ENCODE measurements at regions of chr1 and their contacts with region 1.

Region 1: GRCh38 chr1:221741711-221742554 is at the start of gene DUSP10:
- DNase-seq: peak; percentile 100
- ATAC-seq: peak; percentile 93
- H3K4me3 ChIP-seq: peak within 1 kb of the TSS; percentile 74
- H3K27ac ChIP-seq: peak within 1 kb of the TSS; percentile 92
- H3K4me1 ChIP-seq: peaks cover 14% of the 10 kb centered on the region
- H3K27me3 ChIP-seq: no peaks in the 10 kb centered on the region
- CTCF ChIP-seq: 0 out of 2 replicates have a peak, but pooled peaks have one; percentile 8
- POLR2A ChIP-seq: peak; percentile 94
- RAD21 ChIP-seq: peak; percentile 49
- total RNA-seq, gene DUSP10: 59.1 and 71.4 TPM in 2 replicates

Region 2: GRCh38 chr1:221478050-221478949 is 263.6 kb before region 1 on chr1:
- CTCF ChIA-PET with region 1: interaction called, 9 read pairs
- POLR2A ChIA-PET with region 1: no interaction called
- dilution Hi-C with region 1: no loop called
- in situ Hi-C with region 1: no loop called
- intact Hi-C with region 1: loop called (anchors 1 kb)
- DNase-seq: peak; percentile 91
- ATAC-seq: peak; percentile 100
- H3K4me3 ChIP-seq: no peak overlapping the region
- H3K27ac ChIP-seq: no peak overlapping the region
- H3K4me1 ChIP-seq: 0 out of 2 replicates have a peak, but pooled peaks cover 2% of the 10 kb centered on the region
- H3K27me3 ChIP-seq: no peaks in the 10 kb centered on the region
- CTCF ChIP-seq: peak; percentile 90
- POLR2A ChIP-seq: peak; percentile 49; the same call in 1 of the 2 replicates
- RAD21 ChIP-seq: peak; percentile 98

Region 3: DNA sequence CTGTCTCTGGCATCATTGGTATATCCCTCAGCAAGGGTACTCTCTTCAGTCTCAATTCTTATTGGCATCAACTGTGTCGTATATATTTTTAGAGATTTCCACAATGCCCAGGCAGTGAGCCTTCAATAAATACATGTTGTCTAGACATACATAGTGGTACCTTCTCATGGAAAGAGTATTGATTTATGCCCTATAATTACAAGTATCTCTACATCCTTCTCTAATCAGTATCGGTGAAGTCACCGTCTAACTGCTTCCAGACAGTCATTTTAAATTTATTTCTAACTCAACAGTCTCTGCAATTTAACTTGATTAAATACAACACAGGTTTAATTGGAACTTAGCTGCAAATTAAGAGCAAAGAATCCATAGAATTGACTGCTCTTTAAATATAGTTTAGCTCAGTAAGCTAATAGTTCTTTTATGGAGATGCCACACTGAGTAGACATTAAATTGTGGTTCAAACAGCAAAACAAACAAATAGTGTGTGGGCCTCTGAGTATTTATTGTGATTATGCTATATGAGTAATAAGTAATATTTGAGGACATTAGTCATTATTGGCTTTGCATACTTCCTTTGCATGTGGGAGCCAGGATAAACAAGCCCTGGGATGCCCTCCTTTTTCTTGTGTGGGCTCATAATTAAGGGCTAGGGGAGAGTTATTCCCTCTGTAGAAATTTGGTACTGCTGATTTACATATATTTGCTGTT is 126.8 kb after region 1 on chr1:
- CTCF ChIA-PET with region 1: interaction called, 3 read pairs
- POLR2A ChIA-PET with region 1: interaction called, 4 read pairs
- dilution Hi-C with region 1: no loop called
- in situ Hi-C with region 1: no loop called
- intact Hi-C with region 1: loop called (anchors 1 kb)
- DNase-seq: peak; percentile 87
- ATAC-seq: peak; percentile 78
- H3K4me3 ChIP-seq: no peak overlapping the region
- H3K27ac ChIP-seq: no peak overlapping the region
- H3K4me1 ChIP-seq: peaks cover 11% of the 10 kb centered on the region
- H3K27me3 ChIP-seq: no peaks in the 10 kb centered on the region
- CTCF ChIP-seq: no peak
- POLR2A ChIP-seq: no peak
- RAD21 ChIP-seq: peak; percentile 12; the same call in 1 of the 2 replicates

Region 4: DNA sequence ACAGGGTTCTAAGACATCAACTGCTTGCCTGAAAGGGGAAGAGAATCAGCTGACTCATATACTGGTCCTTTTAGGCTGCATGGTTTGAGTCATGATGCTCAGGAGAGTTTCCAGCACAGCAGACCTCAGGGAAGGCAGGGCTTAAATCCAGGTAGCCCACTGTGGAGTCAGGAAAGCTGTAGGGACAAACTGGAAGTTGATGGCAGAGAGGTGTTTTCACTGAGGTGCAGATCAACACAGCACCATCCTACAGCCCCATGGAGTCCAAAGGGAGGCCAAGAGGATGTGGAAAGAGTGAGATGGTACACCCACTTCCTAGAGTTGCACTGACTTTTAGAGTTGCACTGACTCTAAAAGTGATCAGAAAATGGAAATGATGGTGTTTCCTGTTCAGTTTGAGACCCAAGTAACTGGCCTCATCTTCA is 252.4 kb after region 1 on chr1:
- CTCF ChIA-PET with region 1: no interaction called
- POLR2A ChIA-PET with region 1: no interaction called
- dilution Hi-C with region 1: no loop called
- in situ Hi-C with region 1: loop called (anchors 10 kb)
- intact Hi-C with region 1: loop called (anchors 2 kb)
- DNase-seq: peak; percentile 85
- ATAC-seq: 0 out of 2 replicates have a peak, but pooled peaks have one; percentile 22
- H3K4me3 ChIP-seq: no peak overlapping the region
- H3K27ac ChIP-seq: peak overlapping the region; percentile 61
- H3K4me1 ChIP-seq: peaks cover 37% of the 10 kb centered on the region
- H3K27me3 ChIP-seq: no peaks in the 10 kb centered on the region
- CTCF ChIP-seq: no peak
- POLR2A ChIP-seq: no peak; the same call in 1 of the 2 replicates
- RAD21 ChIP-seq: no peak

Region 5: GRCh38 chr1:222171005-222171404 is 429.1 kb after region 1 on chr1:
- CTCF ChIA-PET with region 1: no interaction called
- POLR2A ChIA-PET with region 1: no interaction called
- dilution Hi-C with region 1: no loop called
- in situ Hi-C with region 1: loop called (anchors 10 kb)
- intact Hi-C with region 1: loop called (anchors 1 kb)
- DNase-seq: peak; percentile 70
- ATAC-seq: peak; percentile 68
- H3K4me3 ChIP-seq: no peak overlapping the region
- H3K27ac ChIP-seq: no peak overlapping the region
- H3K4me1 ChIP-seq: peaks cover 2% of the 10 kb centered on the region
- H3K27me3 ChIP-seq: no peaks in the 10 kb centered on the region
- CTCF ChIP-seq: peak; percentile 58
- POLR2A ChIP-seq: no peak
- RAD21 ChIP-seq: peak; percentile 76

Region 6: DNA sequence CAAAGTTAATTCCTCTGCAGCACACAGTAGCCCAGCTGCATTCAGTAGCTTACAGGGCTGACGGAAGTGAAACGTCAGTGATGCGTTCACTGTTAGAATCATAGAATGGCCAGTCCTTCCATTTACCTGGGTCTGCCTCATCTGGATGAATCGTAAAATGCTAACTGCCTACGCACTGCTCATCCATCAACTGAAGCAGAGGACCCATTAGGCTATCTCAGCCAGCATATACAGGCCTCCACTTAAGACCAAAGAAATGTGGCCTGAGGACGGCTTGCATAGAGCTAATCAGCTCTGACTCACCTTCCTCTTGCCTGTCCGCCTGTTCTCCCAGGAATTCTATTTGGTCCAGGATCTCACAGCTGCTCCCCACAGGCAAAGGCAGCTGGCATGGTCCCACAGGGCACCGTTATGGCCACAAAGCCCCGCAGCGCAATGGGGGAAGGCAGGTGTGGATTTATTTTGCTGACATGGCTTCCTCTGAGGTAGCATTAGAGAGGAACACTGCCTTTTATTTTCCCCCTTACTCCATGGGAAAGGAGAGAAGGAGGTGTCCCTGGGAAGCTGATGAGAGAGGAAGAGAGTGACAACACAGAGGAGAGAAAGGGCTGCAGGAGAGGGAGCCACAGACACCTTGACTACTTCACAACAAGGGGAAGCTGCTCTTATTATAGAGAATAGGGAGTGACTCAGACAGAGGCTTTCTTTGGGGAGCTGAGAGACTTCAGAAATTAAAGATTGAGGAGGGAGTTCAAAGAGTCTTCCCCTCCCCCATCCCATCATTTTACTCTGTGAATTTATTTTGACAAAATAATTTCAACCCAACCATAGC is 628.4 kb after region 1 on chr1:
- CTCF ChIA-PET with region 1: no interaction called
- POLR2A ChIA-PET with region 1: no interaction called
- dilution Hi-C with region 1: no loop called
- in situ Hi-C with region 1: no loop called
- intact Hi-C with region 1: loop called (anchors 2 kb)
- DNase-seq: peak; percentile 97
- ATAC-seq: peak; percentile 56
- H3K4me3 ChIP-seq: no peak overlapping the region
- H3K27ac ChIP-seq: peak overlapping the region; percentile 99
- H3K4me1 ChIP-seq: peaks cover 30% of the 10 kb centered on the region
- H3K27me3 ChIP-seq: no peaks in the 10 kb centered on the region
- CTCF ChIP-seq: no peak
- POLR2A ChIP-seq: no peak
- RAD21 ChIP-seq: no peak; the same call in 1 of the 2 replicates

Region 7: GRCh38 chr1:222521299-222522104 is 779.6 kb after region 1 on chr1:
- CTCF ChIA-PET with region 1: no interaction called
- POLR2A ChIA-PET with region 1: no interaction called
- dilution Hi-C with region 1: no loop called
- in situ Hi-C with region 1: no loop called
- intact Hi-C with region 1: no loop called
- DNase-seq: peak; percentile 44
- ATAC-seq: peak; percentile 35; the same call in 1 of the 2 replicates
- H3K4me3 ChIP-seq: no peak overlapping the region
- H3K27ac ChIP-seq: no peak overlapping the region
- H3K4me1 ChIP-seq: no peaks in the 10 kb centered on the region
- H3K27me3 ChIP-seq: peaks cover 5% of the 10 kb centered on the region
- CTCF ChIP-seq: no peak
- POLR2A ChIP-seq: no peak
- RAD21 ChIP-seq: no peak